H1 (cell line): ENCODE measurements at regions of chrX and their contacts with region 1.

Region 1: GRCh38 chrX:24498975-24499374 is 33.9 kb downstream of the PDK3 start:
- DNase-seq: no peak
- H3K4me3 ChIP-seq: no peak overlapping the region
- H3K27ac ChIP-seq: no peak overlapping the region
- H3K4me1 ChIP-seq: peaks cover 0 to 3% (median under 1%) of the 10 kb centered on the region in 4 experiments; a peak in 3 of 7 replicates
- H3K27me3 ChIP-seq: no peaks in the 10 kb centered on the region
- CTCF ChIP-seq: peak in 1 of 3 experiments; percentile 15; a peak in 1 of 4 replicates
- EP300 ChIP-seq: no peak
- POLR2A ChIP-seq: no peak
- RAD21 ChIP-seq: peak in 1 of 2 experiments; percentile 42; a peak in 3 of 4 replicates

Region 2: DNA sequence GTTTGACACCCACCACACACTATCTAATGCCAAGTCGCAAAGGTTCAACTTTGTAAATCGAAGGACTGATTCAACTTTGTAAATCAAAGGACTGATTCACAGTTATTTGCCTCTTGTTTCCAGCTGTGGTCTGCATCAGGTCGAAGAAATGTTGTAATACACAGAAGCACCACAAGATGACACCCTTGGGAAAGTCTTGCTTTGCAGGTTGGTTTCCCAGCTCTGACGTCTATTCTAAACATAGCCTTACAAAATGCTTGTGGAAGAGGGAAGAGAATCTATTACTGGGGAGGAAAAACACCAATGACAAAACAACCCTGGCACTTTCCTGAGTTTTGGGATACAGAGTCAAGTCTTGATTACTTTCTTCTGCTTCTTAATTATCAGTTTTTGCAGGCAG is 103.2 kb before region 1 on chrX:
- CTCF ChIA-PET with region 1: interaction called, 144 read pairs
- POLR2A ChIA-PET with region 1: no interaction called
- DNase-seq: no peak
- H3K4me3 ChIP-seq: no peak overlapping the region
- H3K27ac ChIP-seq: no peak overlapping the region
- H3K4me1 ChIP-seq: no peaks in the 10 kb centered on the region; a peak in 1 of 7 replicates
- H3K27me3 ChIP-seq: no peaks in the 10 kb centered on the region
- CTCF ChIP-seq: peak in 2 of 3 experiments; percentile 70 to 79; a peak in 3 of 4 replicates
- EP300 ChIP-seq: no peak
- POLR2A ChIP-seq: no peak
- RAD21 ChIP-seq: peak; percentile 87 to 91

Region 3: DNA sequence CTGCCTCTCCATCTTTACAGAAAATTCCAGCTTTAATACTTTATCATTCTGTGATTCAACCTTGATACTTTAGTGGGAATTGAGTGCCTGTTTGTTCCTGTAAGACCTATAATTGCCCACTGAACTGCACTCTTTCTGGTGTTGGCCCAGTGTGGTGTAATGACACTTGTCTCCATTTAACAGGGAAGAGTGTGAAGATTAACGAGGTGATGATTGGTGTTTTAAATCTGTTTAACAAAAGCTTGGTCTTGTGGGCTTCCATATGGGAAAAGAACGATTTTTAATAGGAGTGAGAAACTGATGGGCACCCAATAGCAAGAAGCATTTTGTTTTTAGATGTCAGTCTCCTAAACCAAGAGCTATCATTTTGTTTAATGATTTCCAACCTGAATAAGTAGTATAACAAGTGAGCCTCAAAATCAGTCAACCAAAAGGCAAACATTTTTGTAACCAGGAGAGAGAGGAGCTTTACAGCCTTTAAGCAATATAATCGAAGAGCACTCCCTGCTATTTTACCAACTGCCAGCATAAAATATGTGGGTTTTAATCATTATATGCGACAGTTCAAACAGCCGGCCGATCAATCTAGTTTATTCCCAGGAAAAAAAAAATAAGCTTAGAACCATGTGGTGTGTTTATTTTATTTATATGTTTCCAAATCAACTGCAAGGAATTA is 88.3 kb before region 1 on chrX:
- CTCF ChIA-PET with region 1: interaction called, 10 read pairs
- POLR2A ChIA-PET with region 1: no interaction called
- DNase-seq: no peak
- H3K4me3 ChIP-seq: no peak overlapping the region
- H3K27ac ChIP-seq: no peak overlapping the region
- H3K4me1 ChIP-seq: no peaks in the 10 kb centered on the region
- H3K27me3 ChIP-seq: no peaks in the 10 kb centered on the region
- CTCF ChIP-seq: no peak
- EP300 ChIP-seq: no peak
- POLR2A ChIP-seq: no peak
- RAD21 ChIP-seq: no peak

Region 4: DNA sequence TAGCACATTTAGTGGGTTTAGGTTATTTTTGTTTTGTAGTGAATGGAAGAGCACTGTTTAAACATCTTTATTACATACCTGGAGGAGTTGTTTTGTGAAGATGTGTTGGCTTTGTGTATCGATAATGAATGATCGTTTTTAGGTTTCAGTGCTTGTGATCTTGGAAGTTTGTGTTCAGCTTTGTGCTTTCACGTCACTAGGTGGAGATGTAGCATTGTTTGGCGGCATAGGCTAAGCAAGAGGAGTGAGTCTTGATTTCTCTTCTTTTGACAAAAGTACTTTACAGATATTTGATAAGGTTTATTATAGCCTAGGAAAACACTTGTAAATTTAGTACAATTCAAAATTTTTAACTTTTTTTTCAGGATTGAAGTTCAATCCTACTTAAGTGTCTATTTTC is 16.5 kb after region 1 on chrX:
- CTCF ChIA-PET with region 1: interaction called, 10 read pairs
- POLR2A ChIA-PET with region 1: no interaction called
- DNase-seq: no peak
- H3K4me3 ChIP-seq: no peak overlapping the region
- H3K27ac ChIP-seq: no peak overlapping the region
- H3K4me1 ChIP-seq: no peaks in the 10 kb centered on the region
- H3K27me3 ChIP-seq: no peaks in the 10 kb centered on the region
- CTCF ChIP-seq: peak in 2 of 3 experiments; percentile 27 to 49; a peak in 2 of 4 replicates
- EP300 ChIP-seq: no peak
- POLR2A ChIP-seq: no peak
- RAD21 ChIP-seq: peak; percentile 65 to 70

Region 5: DNA sequence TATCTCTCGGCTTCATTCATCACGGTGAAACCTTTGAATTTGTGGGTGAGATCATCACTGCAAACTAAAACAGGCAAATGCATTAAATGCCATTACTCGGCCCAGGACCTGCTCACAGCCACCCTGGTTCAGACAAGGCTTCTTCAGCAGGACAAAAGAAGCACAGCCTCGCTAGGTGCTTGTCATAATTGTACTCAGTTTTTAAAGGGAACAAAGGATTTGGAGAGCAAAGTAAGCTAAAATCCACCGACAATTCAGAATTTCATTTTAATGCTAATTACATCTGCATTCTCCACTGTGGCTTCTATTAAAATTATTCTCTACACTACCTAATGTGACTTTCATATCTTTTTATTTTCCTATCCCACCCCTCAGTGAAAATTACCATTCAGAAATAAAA is 91.1 kb after region 1 on chrX:
- CTCF ChIA-PET with region 1: no interaction called
- POLR2A ChIA-PET with region 1: no interaction called
- DNase-seq: no peak
- H3K4me3 ChIP-seq: no peak overlapping the region
- H3K27ac ChIP-seq: no peak overlapping the region
- H3K4me1 ChIP-seq: no peaks in the 10 kb centered on the region
- H3K27me3 ChIP-seq: no peaks in the 10 kb centered on the region
- CTCF ChIP-seq: no peak
- EP300 ChIP-seq: no peak
- POLR2A ChIP-seq: no peak
- RAD21 ChIP-seq: no peak